Posterior cingulate gyrus (tissue), 11 donors: ENCODE measurements at regions of chr14 and their contacts with region 1.

Region 1: GRCh38 chr14:76812211-76813044 is at the start of gene ANGEL1:
- DNase-seq: peak; percentile 90 to 99 (median 92)

Region 2: DNA sequence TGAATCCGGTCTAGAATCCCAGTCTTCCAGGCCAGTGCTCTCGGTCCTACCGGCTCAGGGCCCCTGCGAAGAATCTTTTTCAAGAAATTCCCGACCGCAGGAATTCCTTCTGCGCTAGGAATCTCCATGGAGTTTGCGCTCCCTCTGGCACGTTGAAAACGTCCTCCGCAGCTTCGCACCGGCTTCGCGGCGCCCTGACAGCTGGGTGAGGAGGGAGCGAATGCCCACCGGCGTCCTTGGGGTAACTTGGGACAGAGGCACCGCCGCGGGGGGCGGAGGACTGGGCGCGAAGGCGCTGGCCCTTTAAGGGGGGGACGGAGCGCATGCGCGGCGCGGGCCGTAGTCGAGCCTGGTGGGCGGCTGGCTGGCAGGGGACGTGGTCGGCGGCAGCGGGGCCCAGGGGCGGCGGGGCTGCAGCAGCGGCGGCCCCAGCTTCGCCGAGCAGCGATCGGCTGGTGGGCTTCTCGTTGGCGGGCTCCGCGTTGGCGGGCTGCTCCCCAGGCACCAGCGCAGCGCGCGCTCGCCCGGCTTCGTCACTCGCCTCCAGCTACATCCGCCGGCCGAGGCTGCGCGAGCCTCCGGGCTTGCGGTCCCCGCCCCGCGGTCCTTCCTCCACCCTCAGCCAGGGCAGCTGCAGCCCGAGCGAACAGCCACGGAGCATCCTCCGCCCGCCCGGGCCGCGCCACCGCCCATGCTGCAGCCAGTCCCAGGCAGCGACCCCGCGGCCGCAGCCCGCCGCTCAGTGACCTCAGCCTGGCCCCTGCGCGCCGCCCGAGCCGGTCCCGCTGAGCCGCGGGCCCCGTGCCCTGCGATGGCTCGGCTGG is 51.1 kb before region 1 on chr14 and contains the start of gene VASH1:
- intact Hi-C with region 1: loop called (anchors 1 kb)
- DNase-seq: peak; percentile 66 to 97 (median 78)

Region 3: GRCh38 chr14:76829650-76830421 is 17.4 kb after region 1 on chr14:
- intact Hi-C with region 1: loop called (anchors 2 kb)
- DNase-seq: peak; percentile 75 to 97 (median 88)